ENCODE measurements at regions of chr3 and their contacts with region 1.

Region 1: GRCh38 chr3:31132132-31132769 is 237.8 kb upstream of the GADL1 start:
- H3K4me3 Mint-ChIP-seq: no peak overlapping the region
- H3K27ac Mint-ChIP-seq: no peak overlapping the region
- H3K4me1 Mint-ChIP-seq: no peaks in the 10 kb centered on the region
- H3K27me3 Mint-ChIP-seq: no peaks in the 10 kb centered on the region

Region 2: GRCh38 chr3:30012941-30013543 is 1119.2 kb before region 1 on chr3:
- intact Hi-C with region 1: loop called (anchors 5 kb)
- H3K4me3 Mint-ChIP-seq: no peak overlapping the region
- H3K27ac Mint-ChIP-seq: no peak overlapping the region
- H3K4me1 Mint-ChIP-seq: no peaks in the 10 kb centered on the region
- H3K27me3 Mint-ChIP-seq: no peaks in the 10 kb centered on the region

Region 3: GRCh38 chr3:30768703-30769685 is 363.3 kb before region 1 on chr3:
- intact Hi-C with region 1: loop called (anchors 2 kb)
- H3K4me3 Mint-ChIP-seq: no peak overlapping the region
- H3K27ac Mint-ChIP-seq: no peak overlapping the region
- H3K4me1 Mint-ChIP-seq: peaks cover 19% of the 10 kb centered on the region
- H3K27me3 Mint-ChIP-seq: no peaks in the 10 kb centered on the region

Region 4: GRCh38 chr3:30964612-30965011 is 167.6 kb before region 1 on chr3:
- intact Hi-C with region 1: loop called (anchors 10 kb)
- H3K4me3 Mint-ChIP-seq: no peak overlapping the region
- H3K27ac Mint-ChIP-seq: no peak overlapping the region
- H3K4me1 Mint-ChIP-seq: no peaks in the 10 kb centered on the region
- H3K27me3 Mint-ChIP-seq: no peaks in the 10 kb centered on the region